PC-9 (cell line): ENCODE measurements at regions of chr10 and their contacts with region 1.

Region 1: DNA sequence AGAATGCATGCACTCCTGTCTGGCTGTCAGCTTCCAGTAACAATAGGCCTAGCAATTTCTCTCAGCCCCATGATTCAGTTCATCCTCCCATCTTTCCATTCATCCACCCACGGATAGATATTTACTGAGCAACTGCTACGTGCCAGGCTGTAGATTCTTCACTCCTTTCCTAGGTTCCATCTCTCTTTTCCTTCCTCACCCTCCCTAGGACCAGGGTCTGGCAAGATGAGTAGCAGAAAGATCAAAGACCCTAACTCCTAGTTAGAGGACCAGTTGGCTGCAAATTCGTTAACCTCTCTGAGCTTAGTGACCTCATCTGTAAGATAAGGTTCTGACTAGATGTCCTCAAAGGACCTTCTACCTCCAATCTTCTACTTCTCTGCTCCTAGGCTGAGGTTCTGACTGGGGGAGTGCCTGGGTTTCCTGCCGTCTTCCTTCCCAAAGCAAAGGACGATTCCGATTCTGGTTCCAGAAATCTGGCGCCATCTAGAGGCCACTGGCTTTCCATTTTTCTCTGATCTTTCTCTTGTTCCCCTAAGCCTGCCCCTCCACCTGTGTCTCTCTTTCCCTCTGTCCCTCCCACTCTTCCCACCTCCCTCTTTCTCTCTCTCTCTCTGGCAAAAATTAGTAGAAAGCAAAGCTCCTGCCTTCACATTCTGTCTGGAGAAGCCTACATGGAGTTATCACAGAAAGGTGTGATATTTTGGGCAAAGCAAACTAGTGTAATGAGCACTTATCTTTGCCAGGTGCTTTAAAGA is 26.2 kb downstream of the TBATA start:
- DNase-seq: peak; percentile 51 to 66
- H3K4me3 ChIP-seq: no peak overlapping the region
- H3K27ac ChIP-seq: no peak overlapping the region
- H3K4me1 ChIP-seq: peaks cover 19% of the 10 kb centered on the region
- H3K27me3 ChIP-seq: no peaks in the 10 kb centered on the region
- CTCF ChIP-seq: peak; percentile 84

Region 2: GRCh38 chr10:70461215-70461986 is 297.5 kb before region 1 on chr10:
- CTCF ChIA-PET with region 1: interaction called, 3 read pairs
- POLR2A ChIA-PET with region 1: no interaction called
- intact Hi-C with region 1: loop called (anchors 1 kb)
- DNase-seq: peak in 1 of 2 experiments; percentile 64
- H3K4me3 ChIP-seq: no peak overlapping the region
- H3K27ac ChIP-seq: no peak overlapping the region
- H3K4me1 ChIP-seq: peaks cover 14% of the 10 kb centered on the region; the same call in 1 of the 2 replicates
- H3K27me3 ChIP-seq: peaks cover 17% of the 10 kb centered on the region; the same call in 1 of the 2 replicates
- CTCF ChIP-seq: peak; percentile 95

Region 3: DNA sequence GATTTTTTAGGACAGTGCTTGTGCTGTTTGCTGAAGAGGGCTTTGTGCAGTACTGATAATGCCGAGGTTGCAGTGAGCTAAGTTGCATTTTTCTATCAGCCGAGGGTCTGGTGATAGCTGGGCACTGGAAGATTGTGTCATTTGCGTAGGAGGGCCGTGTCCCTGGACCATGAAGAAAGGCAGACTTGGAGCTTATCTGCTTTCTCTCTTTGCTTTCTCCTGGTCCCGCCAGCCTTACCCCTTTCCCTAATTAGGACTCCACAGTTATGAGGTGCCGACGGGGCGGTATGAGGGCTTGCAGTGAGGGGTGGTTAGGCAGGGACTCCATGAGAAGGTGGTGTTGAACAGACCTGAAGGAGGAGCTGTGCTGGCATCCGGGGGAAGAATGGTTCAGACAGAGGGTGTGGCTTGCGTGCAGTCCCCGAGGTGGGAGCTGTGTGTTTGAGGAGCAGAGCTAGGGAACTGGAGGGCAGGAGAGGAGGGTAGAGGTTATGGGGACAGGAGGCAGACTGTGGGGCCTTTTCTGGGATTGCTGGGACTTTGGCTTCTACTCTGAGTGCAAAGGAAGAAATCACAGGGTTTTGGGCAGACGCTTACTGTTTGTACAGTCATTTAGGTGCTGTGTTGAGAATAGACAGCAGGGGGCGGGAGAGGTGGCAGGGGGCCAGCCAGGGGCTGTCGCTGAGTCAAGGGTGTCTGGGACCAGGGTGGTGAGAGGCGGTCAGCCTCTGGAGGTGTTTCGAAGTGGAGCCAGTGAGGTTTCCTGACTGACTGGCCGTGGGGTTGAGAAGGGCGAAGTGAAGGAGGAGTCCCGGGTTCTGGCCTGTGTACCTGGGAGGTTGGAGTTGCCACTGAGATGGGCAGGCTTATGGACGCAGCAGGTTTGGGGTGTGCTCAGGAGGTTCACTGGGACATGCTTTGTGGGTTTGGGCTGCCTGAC is 199.8 kb before region 1 on chr10:
- CTCF ChIA-PET with region 1: no interaction called
- POLR2A ChIA-PET with region 1: no interaction called
- intact Hi-C with region 1: loop called (anchors 1 kb)
- DNase-seq: peak in 1 of 2 experiments; percentile 53
- H3K4me3 ChIP-seq: no peak overlapping the region
- H3K27ac ChIP-seq: no peak overlapping the region
- H3K4me1 ChIP-seq: no peaks in the 10 kb centered on the region
- H3K27me3 ChIP-seq: no peaks in the 10 kb centered on the region
- CTCF ChIP-seq: peak; percentile 66

Region 4: DNA sequence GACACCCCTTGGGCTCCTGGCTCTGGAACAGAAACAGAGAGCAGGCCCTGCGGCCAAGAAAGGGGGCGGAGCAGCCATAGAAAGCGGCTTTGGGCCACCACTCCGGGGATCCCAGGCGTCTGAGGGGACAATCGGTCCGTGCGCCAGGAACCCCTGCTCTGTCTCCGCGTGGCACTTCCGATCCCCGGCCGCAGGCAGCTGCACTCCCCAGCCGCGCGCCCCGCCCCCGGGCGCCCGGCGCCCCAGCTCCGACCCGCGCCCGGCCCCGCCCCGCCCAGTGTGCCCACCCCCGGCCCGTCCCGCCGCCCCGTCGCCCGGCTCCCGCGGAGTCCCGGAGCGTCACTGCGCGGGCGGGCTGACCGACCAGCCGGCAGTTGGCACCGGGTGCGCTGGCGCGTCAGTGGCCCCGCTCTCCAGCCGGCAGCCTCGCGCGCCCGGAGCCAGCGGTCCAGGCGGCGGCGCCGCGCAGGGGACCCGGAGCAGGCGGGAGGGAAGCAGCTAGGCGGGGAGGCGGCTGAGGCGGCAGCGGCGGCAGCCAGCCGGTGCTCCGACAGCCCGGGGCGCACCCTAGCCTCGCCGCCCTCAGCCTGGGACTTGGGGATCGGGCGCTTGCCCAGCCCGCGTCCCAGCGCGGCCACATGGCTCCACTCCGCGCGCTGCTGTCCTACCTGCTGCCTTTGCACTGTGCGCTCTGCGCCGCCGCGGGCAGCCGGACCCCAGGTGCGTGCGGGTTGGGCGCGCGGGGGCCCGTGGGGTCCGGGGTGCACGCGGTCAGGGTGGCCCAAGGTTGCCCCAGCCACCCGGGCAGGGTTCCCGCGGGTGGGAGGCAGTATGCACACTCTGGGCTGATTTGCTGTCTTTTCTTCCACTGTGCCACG is 86.5 kb before region 1 on chr10 and contains the start of gene ADAMTS14:
- CTCF ChIA-PET with region 1: no interaction called
- POLR2A ChIA-PET with region 1: no interaction called
- intact Hi-C with region 1: loop called (anchors 5 kb)
- DNase-seq: peak; percentile 34 to 56
- H3K4me3 ChIP-seq: peak within 1 kb of the TSS; percentile 54
- H3K27ac ChIP-seq: no peak within 1 kb of the TSS
- H3K4me1 ChIP-seq: peaks cover 26% of the 10 kb centered on the region
- H3K27me3 ChIP-seq: peaks cover 11% of the 10 kb centered on the region; the same call in 1 of the 2 replicates
- CTCF ChIP-seq: no peak
- total RNA-seq, gene ADAMTS14: 1.9 and 2.7 TPM in 2 replicates

Region 5: GRCh38 chr10:70799124-70799523 is 40.2 kb after region 1 on chr10:
- CTCF ChIA-PET with region 1: no interaction called
- POLR2A ChIA-PET with region 1: no interaction called
- intact Hi-C with region 1: no loop called
- DNase-seq: no peak
- H3K4me3 ChIP-seq: no peak overlapping the region
- H3K27ac ChIP-seq: no peak overlapping the region
- H3K4me1 ChIP-seq: peaks cover 11% of the 10 kb centered on the region
- H3K27me3 ChIP-seq: no peaks in the 10 kb centered on the region
- CTCF ChIP-seq: no peak

Region 6: GRCh38 chr10:70880077-70880534 is 121.2 kb after region 1 on chr10:
- CTCF ChIA-PET with region 1: interaction called, 3 read pairs
- POLR2A ChIA-PET with region 1: no interaction called
- intact Hi-C with region 1: loop called (anchors 1 kb)
- DNase-seq: peak; percentile 59 to 76
- H3K4me3 ChIP-seq: no peak overlapping the region
- H3K27ac ChIP-seq: no peak overlapping the region
- H3K4me1 ChIP-seq: 0 out of 2 replicates have a peak, but pooled peaks cover 8% of the 10 kb centered on the region
- H3K27me3 ChIP-seq: no peaks in the 10 kb centered on the region
- CTCF ChIP-seq: peak; percentile 97

Region 7: GRCh38 chr10:70925377-70926225 is 166.7 kb after region 1 on chr10:
- CTCF ChIA-PET with region 1: no interaction called
- POLR2A ChIA-PET with region 1: no interaction called
- intact Hi-C with region 1: no loop called
- DNase-seq: peak in 1 of 2 experiments; percentile 53
- H3K4me3 ChIP-seq: no peak overlapping the region
- H3K27ac ChIP-seq: no peak overlapping the region
- H3K4me1 ChIP-seq: peaks cover 23% of the 10 kb centered on the region
- H3K27me3 ChIP-seq: no peaks in the 10 kb centered on the region
- CTCF ChIP-seq: peak; percentile 98